Keratinocyte (primary cell): ENCODE measurements at regions of chr3 and their contacts with region 1.

Region 1: GRCh38 chr3:197260491-197261163 is 37.8 kb downstream of the DLG1 start:
- DNase-seq: no peak
- H3K4me3 ChIP-seq: no peak overlapping the region
- H3K27ac ChIP-seq: no peak overlapping the region
- H3K4me1 ChIP-seq: peaks cover 8% of the 10 kb centered on the region
- H3K27me3 ChIP-seq: no peaks in the 10 kb centered on the region
- CTCF ChIP-seq: no peak

Region 2: GRCh38 chr3:197372047-197372666 is 111.5 kb after region 1 on chr3:
- dilution Hi-C with region 1: loop called (anchors 10 kb)
- DNase-seq: peak; percentile 95
- H3K4me3 ChIP-seq: peak overlapping the region in 2 of 3 experiments; percentile 21 to 29
- H3K27ac ChIP-seq: peak overlapping the region; percentile 73
- H3K4me1 ChIP-seq: peaks cover 61% of the 10 kb centered on the region
- H3K27me3 ChIP-seq: no peaks in the 10 kb centered on the region
- CTCF ChIP-seq: no peak